Posterior vena cava (tissue), 2 donors: ENCODE measurements at regions of chr9 and their contacts with region 1.

Region 1: DNA sequence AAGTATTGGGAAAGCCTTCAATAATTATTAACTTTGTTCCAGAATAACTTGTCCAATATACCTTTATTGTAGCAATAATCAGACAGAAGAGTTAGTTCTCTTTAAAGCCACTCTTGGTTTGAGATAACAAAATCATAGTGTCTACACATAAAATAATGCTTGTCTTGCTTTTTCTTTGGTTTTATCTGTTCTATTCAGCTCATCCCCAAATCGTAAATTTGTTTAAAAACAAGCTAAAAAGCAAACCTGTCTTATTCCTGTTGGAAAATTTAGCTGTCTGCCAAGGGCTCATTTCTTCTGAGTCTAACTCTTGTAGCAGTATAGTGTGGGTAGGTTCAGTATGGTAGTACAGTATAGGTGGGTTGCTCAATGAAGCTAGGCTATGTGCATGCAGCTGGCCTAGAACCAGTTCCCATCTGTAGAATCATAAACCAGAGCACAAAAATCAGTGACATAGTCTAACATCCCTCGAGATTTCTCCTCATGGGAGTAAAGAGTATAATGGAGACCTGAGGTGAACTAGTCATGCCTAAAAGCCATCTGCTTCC is 17.9 kb upstream of the APBA1 start:
- DNase-seq: no peak

Region 2: DNA sequence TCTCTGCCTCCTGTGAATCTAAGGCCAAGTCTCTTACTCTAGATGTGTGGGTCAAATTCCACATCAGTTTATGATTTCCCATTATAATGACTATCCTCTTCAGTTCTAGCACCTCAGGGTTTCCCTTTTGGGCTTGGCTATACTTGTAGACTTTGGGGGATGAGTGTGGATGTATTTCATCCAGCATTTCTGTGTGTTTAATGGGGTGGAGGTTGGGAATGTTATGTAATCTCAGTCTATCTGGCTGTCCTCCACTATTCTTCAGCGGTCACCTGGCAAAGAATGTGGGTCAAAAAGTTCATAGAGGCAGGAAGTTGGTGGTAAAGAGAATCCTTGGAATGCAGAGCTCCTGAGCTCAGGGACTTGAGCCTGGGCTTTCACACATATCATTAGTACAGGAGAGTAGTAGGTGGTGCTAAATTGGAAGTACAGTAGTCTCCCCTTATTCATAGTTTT is 195.4 kb after region 1 on chr9:
- intact Hi-C with region 1: loop called in 1 of 2 experiments (anchors 10 kb)
- DNase-seq: no peak